Pancreas (tissue), 10 donors: ENCODE measurements at regions of chr12 and their contacts with region 1.

Region 1: GRCh38 chr12:120640840-120641833 is 711 bp downstream of the CABP1 start:
- DNase-seq: peak; percentile 49 to 91 (median 68)
- ATAC-seq: peak; percentile 91 to 94 (median 93)
- H3K4me3 ChIP-seq: peak overlapping the region; percentile 11 to 55 (median 33)
- H3K27ac ChIP-seq: no peak overlapping the region
- H3K4me1 ChIP-seq: peaks cover 0 to 5% (median 4%) of the 10 kb centered on the region in 3 donors
- H3K27me3 ChIP-seq: peaks cover 0 to 11% (median 0%) of the 10 kb centered on the region in 4 donors
- CTCF ChIP-seq: no peak

Region 2: GRCh38 chr12:120437754-120438494 is 203.2 kb before region 1 on chr12 and contains the start of gene COX6A1:
- intact Hi-C with region 1: no loop called
- DNase-seq: peak; percentile 88 to 98 (median 96)
- ATAC-seq: peak; percentile 95 to 99 (median 96)
- H3K4me3 ChIP-seq: peak within 1 kb of the TSS; percentile 42 to 90 (median 66)
- H3K27ac ChIP-seq: peak within 1 kb of the TSS; percentile 9 to 72 (median 58)
- H3K4me1 ChIP-seq: peaks cover 10 to 11% (median 10%) of the 10 kb centered on the region in 3 donors
- H3K27me3 ChIP-seq: no peaks in the 10 kb centered on the region
- CTCF ChIP-seq: no peak
- total RNA-seq, gene COX6A1: 118 to 149 (median 137) TPM

Region 3: GRCh38 chr12:120580787-120581723 is 60.1 kb before region 1 on chr12 and contains the start of gene POP5:
- intact Hi-C with region 1: loop called in 1 of 3 experiments (anchors 10 kb)
- DNase-seq: peak; percentile 94 to 99 (median 97)
- ATAC-seq: peak; percentile 92 to 96 (median 94)
- H3K4me3 ChIP-seq: peak within 1 kb of the TSS; percentile 74 to 86 (median 80)
- H3K27ac ChIP-seq: peak within 1 kb of the TSS in 2 of 4 donors; percentile 44 to 62
- H3K4me1 ChIP-seq: peaks cover 6 to 12% (median 6%) of the 10 kb centered on the region in 3 donors
- H3K27me3 ChIP-seq: no peaks in the 10 kb centered on the region
- CTCF ChIP-seq: no peak
- total RNA-seq, gene POP5: 10.5 to 23.5 (median 14.7) TPM

Region 4: DNA sequence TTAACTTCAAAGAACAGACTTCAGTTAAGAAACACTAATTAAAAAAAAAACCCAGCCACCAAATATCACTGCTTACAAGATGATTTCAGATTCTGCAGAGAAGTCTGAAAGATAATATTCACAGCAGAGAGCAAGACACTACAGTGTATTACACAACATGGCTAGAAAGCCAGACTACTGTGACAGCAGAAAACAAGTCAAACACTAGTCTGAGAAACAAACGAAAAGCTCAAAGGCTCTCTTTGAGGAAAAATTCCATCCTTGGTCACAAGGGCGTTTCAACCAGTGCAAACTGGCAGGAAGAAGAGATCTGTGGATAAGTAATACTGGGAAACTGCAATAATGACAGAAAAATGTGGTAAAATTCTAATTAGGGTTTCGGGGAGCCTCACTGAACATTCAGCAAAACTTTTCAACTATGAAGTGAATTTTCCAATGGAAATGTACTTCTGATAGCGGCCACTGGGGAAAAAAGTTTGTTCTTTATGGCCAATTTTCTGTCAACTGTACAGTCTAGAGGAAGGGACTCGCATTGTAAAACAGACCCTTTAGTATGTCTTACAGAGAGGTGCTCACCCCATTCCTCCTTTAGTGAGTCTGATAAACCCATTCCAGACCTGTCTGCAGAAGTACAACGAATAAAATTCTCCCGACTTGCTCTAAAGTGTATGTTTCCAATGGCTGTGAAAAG is 134.9 kb after region 1 on chr12:
- intact Hi-C with region 1: no loop called
- DNase-seq: no peak
- ATAC-seq: no peak
- H3K4me3 ChIP-seq: no peak overlapping the region
- H3K27ac ChIP-seq: no peak overlapping the region
- H3K4me1 ChIP-seq: no peaks in the 10 kb centered on the region
- H3K27me3 ChIP-seq: no peaks in the 10 kb centered on the region
- CTCF ChIP-seq: peak in 1 of 4 donors; percentile 13